Psoas muscle (tissue), 8 donors: ENCODE measurements at regions of chr1 and their contacts with region 1.

Region 1: DNA sequence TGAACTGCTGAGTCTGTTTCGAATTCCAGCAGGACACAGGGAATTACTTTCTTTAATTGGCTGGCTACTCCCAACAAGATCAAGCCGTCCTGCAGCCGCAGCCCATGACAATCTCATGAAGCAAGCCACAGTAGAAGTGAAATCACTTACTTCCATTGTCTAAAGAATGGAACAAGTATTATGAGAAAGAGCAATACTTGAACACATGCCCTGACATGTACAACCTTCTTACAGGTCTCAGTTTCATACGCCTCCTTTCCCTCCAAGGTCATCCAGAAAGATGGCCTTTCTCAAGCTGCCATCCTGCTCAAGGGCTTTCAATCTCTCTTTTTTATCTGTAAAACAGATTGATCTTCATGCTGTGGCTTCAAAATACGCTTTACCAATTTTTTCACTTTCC is 85.1 kb downstream of the PCSK9 start:
- DNase-seq: no peak
- ATAC-seq: no peak
- H3K4me3 ChIP-seq: no peak overlapping the region
- H3K27ac ChIP-seq: no peak overlapping the region
- H3K4me1 ChIP-seq: no peaks in the 10 kb centered on the region
- H3K27me3 ChIP-seq: no peaks in the 10 kb centered on the region
- CTCF ChIP-seq: no peak

Region 2: DNA sequence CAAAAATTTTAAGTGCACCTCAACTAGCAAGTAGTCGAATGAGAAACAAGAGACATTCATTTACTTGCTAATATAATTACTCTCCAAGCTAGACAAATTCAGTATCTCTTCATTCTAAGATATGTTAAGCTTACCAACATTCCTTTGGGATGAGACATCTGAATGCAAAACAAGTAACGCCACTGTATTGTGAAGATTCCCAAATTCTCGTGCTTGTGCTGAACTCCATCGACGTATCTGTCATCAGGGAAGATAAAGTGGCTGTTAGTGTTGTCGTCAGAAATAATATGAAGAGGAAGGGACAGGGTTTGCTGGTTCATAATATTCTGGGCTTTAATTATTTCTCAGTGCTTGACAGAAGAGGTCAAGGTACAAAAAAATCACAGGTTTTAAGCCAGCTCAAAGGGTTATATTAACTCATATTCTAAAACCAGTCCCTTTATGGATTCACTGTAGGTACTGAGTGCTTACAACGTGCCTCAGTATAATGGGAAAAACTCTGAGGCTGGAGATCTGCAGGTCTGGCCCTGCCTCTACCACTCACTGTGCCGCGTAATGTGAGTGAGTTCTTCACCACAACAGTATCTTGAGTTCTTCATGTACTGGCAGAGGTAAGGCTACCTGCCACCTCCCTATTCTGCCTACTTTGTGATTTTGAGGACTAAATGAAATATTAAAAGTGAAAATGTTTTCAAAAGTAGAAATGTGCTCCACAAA is 43.1 kb before region 1 on chr1:
- intact Hi-C with region 1: loop called (anchors 5 kb)
- DNase-seq: no peak
- ATAC-seq: no peak
- H3K4me3 ChIP-seq: no peak overlapping the region
- H3K27ac ChIP-seq: no peak overlapping the region
- H3K4me1 ChIP-seq: no peaks in the 10 kb centered on the region
- H3K27me3 ChIP-seq: no peaks in the 10 kb centered on the region
- CTCF ChIP-seq: no peak

Region 3: DNA sequence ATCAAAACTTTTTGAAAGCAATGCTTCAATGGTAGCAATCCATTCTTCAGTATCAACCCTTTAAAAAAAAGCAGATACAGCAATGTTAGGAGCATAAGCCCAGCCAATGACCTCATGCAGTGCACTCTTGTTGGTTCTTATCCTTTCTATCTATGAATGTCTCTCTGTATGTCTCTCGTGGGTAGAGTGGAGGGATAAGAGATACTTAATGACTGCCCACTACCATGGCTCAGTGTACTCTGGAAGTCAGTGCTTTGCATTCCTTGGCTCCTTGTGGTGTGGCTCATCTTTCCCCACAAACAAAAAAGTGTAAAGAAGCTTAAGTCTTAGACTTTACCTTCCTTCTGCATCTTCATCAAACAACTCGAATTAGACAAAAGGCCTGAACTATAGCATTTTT is 34.8 kb before region 1 on chr1:
- intact Hi-C with region 1: loop called (anchors 5 kb)
- DNase-seq: no peak
- ATAC-seq: no peak
- H3K4me3 ChIP-seq: no peak overlapping the region
- H3K27ac ChIP-seq: no peak overlapping the region
- H3K4me1 ChIP-seq: no peaks in the 10 kb centered on the region
- H3K27me3 ChIP-seq: no peaks in the 10 kb centered on the region
- CTCF ChIP-seq: no peak